Caco-2 (cell line): ENCODE measurements at regions of chr10 and their contacts with region 1.

Region 1: DNA sequence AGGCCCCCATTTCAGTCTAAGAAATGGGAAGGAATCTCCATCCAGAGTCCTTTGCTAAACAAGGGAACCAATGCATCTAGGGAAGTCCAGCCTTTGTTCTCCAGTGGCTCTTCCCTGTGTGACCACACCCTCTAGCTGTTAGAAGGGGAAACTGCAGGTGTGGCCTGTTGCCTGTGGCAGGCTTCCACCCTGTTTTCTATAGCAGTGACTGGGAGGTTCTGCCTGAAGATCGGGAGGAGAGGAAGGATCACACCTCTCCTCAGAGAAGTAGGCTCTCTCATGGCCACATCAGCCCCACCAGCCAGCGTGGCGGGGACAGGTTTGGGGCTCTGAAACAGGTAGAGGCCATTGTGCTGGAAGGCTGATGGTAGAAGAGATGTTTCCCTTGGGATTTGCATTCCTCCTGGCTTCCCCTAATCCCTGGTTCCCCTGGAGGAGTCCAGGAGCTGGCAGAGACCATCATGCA is 47.7 kb upstream of the TRIM8 start:
- DNase-seq: peak; percentile 69
- H3K4me3 ChIP-seq: no peak overlapping the region
- H3K4me3 Mint-ChIP-seq: no peak overlapping the region
- H3K27ac Mint-ChIP-seq: no peak overlapping the region
- H3K4me1 ChIP-seq: peaks cover 26% of the 10 kb centered on the region
- H3K4me1 Mint-ChIP-seq: peaks cover 9% of the 10 kb centered on the region
- H3K27me3 ChIP-seq: no peaks in the 10 kb centered on the region
- H3K27me3 Mint-ChIP-seq: no peaks in the 10 kb centered on the region
- CTCF ChIP-seq: peak; percentile 91 to 93

Region 2: DNA sequence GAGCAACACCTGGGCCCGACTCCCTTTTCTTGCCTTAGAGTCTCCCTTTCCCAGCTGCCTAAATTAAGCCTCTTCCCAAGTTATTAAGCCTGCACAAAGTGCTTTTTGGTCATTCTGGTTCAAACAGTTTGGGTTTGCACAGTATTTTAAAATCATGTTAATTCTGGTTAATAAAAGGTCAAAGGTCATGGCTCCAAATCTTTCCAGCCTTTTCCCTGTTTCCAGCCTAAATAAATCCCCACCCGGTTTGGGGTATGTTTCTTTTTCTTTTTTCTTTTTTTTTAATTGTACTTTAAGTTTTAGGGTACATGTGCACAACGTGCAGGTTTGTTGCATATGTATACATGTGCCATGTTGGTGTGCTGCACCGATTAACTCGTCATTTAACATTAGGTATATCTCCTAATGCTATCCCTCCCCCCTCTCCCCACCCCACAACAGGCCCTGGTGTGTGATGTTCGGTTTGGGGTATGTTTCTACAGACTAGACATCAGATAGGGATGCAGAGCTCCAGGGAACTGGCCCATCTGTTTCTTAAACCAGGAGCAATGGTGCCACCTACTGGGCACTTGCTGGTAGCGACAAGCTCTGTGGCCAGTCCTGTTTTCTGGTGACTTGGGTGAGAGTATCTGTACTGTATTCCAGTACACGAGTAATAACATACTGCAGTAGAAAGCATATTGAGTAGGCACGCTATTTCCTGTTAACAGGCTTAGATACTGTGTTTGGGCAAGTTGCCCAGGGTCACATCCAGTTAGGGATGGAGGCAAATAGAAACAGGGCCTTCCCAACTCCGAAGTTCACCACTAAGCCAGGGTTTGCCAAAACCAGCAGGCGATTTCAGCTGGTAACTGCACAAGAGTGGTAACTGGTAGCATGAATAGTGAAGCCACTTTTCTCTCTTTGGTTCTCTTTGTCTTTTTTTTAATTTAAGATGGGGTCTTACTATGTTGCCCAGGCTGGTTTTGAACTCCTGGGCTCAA is 12.8 kb before region 1 on chr10:
- CTCF ChIA-PET with region 1: interaction called, 16 read pairs
- POLR2A ChIA-PET with region 1: no interaction called
- intact Hi-C with region 1: no loop called
- DNase-seq: peak; percentile 83 to 86
- H3K4me3 ChIP-seq: no peak overlapping the region
- H3K4me3 Mint-ChIP-seq: no peak overlapping the region
- H3K27ac Mint-ChIP-seq: no peak overlapping the region
- H3K4me1 ChIP-seq: no peaks in the 10 kb centered on the region
- H3K4me1 Mint-ChIP-seq: no peaks in the 10 kb centered on the region
- H3K27me3 ChIP-seq: no peaks in the 10 kb centered on the region
- H3K27me3 Mint-ChIP-seq: no peaks in the 10 kb centered on the region
- CTCF ChIP-seq: peak; percentile 78 to 93

Region 3: DNA sequence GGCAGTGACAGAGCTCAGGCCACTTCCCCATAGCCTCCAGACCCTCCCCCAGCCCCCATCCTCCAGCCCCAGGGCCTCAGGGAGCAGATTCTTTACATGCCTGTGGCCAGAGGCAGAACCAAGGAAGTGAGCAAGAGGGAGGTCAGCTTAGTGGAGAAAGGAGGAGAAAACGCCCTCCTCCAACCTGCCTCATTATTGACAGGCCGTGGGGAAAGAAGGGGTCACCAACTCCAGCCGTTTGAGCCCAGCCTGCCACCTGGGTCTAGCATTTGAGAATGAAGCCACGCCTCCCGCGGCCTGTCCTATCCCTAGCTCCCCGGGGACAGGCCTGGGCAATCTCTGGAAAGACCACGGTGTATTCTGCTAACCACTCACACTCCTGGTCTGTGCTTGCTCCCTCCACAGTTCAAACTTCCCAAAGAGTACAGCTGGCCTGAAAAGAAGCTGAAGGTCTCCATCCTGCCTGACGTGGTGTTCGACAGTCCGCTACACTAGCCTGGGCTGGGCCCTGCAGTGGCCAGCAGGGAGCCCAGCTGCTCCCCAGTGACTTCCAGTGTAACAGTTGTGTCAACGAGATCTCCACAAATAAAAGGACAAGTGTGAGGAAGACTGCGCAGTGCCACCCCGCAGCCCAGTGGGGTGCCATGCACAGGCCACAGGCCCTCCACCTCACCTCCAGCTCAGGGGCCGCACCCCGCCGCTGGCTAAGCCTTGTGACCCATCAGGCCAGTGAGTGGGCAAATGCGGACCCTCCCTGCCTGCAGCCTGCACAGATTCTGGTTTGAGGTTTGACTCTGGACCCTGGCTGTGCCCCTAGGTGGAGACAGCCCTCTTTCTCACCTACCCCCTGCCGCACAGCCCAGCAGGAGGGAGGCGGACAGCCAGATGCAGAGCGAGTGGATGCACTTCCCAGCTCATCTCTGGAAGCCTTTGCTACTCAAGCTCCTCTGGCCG is 33.4 kb after region 1 on chr10:
- CTCF ChIA-PET with region 1: interaction called, 5 read pairs
- POLR2A ChIA-PET with region 1: no interaction called
- intact Hi-C with region 1: loop called (anchors 1 kb)
- DNase-seq: peak; percentile 86 to 92
- H3K4me3 ChIP-seq: no peak overlapping the region
- H3K4me3 Mint-ChIP-seq: peak overlapping the region; percentile 25
- H3K27ac Mint-ChIP-seq: peak overlapping the region; percentile 88
- H3K4me1 ChIP-seq: peaks cover 44% of the 10 kb centered on the region
- H3K4me1 Mint-ChIP-seq: peaks cover 67% of the 10 kb centered on the region
- H3K27me3 ChIP-seq: no peaks in the 10 kb centered on the region
- H3K27me3 Mint-ChIP-seq: no peaks in the 10 kb centered on the region
- CTCF ChIP-seq: no peak

Region 4: DNA sequence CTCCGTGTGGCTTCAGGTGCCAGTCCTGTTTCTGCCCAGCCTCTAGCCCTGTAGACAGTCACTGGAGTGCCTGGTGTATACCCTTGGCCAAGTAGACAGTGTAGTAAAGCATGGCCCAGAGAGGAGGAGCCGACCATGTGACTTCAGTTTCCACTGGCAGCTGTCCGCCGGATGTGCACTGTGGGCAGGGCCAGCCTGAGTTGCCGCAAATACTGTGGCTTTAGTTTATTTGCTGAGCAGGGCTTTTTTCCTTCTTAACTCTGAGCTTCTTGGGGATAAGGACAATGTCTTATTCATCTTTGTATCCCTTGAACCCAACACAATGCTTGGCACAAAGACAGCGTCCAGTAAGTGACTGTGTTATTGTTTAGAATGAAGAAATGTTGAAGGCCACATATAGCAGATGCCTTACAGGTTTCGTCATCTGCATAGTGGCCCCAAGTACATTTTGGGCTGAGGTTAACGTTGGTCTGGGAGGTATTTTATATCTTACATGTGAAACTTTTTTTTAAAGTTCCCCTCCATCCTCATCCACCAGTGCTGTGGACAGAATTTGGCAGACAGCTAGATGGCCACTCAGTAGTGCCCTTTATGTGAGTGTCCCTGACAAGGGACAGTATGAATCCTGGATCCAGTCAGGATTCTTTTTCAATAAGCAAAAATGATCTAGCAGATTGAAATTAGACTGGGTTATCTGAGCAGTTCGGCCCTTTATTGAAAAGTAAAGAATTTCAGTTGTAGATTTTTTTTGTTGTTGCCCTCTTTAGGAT is 200.1 kb after region 1 on chr10:
- CTCF ChIA-PET with region 1: no interaction called
- POLR2A ChIA-PET with region 1: no interaction called
- intact Hi-C with region 1: no loop called
- DNase-seq: no peak
- H3K4me3 ChIP-seq: no peak overlapping the region
- H3K4me3 Mint-ChIP-seq: no peak overlapping the region
- H3K27ac Mint-ChIP-seq: no peak overlapping the region
- H3K4me1 ChIP-seq: no peaks in the 10 kb centered on the region
- H3K4me1 Mint-ChIP-seq: no peaks in the 10 kb centered on the region
- H3K27me3 ChIP-seq: no peaks in the 10 kb centered on the region
- H3K27me3 Mint-ChIP-seq: no peaks in the 10 kb centered on the region
- CTCF ChIP-seq: no peak